ENCODE measurements at regions of chr17 and their contacts with region 1.

Region 1: DNA sequence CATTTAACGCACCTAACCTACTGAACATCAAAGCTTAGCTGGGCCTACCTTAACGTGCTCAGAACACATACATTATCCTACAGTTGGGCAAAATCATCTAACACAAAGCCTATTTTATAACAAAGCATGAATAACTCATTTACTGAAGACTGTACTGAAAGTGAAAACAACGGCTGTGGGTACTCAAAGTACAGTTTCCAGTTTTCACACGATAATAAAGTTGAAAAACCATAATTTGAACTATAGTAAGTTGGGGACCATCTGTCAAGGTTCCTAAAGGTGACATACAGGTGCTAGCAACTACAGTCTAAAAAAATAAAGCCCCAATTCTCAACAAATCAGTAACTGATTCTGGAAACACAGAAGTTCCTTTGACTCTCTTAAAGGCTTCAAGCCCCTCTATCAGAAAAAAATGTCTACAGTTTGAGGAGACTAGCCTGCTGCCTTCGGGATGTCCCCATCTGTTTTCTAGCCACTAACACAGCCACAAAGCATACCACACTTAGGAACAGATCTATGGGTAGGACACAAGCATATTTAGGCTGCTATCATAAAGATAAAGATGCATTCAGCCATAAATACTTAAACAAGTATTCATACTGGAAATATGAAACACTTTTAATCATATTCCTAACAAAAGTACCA is 71.3 kb downstream of the KANSL1 start:
- DNase-seq: no peak
- ATAC-seq: no peak
- H3K4me3 ChIP-seq: no peak overlapping the region
- H3K27ac ChIP-seq: no peak overlapping the region
- H3K4me1 ChIP-seq: peaks cover 8 to 15% of the 10 kb centered on the region in 2 donors
- H3K27me3 ChIP-seq: no peaks in the 10 kb centered on the region

Region 2: DNA sequence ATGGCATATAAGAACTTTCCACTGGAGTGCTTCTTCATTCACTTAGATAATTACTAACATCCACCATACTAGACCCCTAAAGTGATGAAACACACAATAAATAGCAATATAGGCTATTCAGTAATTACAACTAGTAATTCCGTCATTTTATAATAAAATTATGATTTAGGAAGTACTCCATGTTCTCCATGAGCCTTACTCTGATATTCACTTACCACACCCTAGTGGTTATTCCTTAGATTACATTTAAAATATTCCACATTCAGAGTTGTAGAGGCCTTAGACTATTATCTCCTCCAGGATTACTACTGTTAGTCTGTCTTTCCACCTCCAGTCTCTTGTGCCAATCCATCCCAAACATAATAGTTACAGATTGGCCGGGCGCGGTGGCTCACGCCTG is 60.5 kb before region 1 on chr17:
- intact Hi-C with region 1: loop called in 1 of 2 experiments (anchors 10 kb)
- DNase-seq: no peak
- ATAC-seq: no peak
- H3K4me3 ChIP-seq: no peak overlapping the region
- H3K27ac ChIP-seq: no peak overlapping the region
- H3K4me1 ChIP-seq: no peaks in the 10 kb centered on the region
- H3K27me3 ChIP-seq: no peaks in the 10 kb centered on the region

Region 3: GRCh38 chr17:46144246-46144645 is 22.3 kb after region 1 on chr17:
- intact Hi-C with region 1: no loop called
- DNase-seq: no peak
- ATAC-seq: no peak
- H3K4me3 ChIP-seq: no peak overlapping the region
- H3K27ac ChIP-seq: no peak overlapping the region
- H3K4me1 ChIP-seq: peaks cover 2 to 4% of the 10 kb centered on the region in 2 donors
- H3K27me3 ChIP-seq: no peaks in the 10 kb centered on the region